ENCODE measurements at regions of chr17 and their contacts with region 1.

Region 1: DNA sequence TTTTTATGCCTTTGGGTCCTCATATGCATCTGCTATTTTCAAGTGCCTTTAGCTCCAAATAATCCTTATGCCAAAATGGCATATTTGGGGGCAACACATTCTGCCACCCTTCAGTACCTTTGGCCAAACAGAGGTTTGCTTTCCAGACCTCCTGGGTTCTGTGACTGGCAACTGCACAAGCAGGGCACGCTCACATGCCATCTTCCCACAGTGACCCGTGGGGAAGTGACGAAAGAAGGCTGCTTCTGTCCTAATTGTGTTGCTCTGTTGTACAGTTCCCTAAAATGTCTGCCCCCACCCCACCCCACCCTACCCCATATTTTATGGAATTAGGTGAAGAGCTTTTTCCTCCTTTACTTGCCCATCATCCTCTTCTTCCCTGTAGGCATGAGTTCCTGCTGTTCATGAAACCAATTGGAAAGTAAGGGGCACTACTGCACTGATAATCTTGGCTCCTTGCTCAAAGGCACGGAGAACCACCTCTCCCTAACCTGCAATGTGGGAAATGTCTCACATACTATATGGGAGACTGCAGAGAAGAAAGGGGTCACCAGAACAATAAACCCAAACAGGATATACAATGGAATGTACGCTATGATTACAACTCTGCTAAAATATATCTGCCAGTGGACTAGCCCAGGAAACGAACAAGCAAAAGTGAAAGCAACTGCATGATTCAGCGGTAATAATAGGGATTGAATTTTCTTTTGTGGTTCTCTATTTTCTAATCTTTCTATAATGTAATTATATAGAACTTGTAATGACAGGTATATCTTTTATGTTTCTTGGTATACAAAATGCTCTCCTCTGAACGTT is 3.3 kb upstream of the SLFN12L start:
- DNase-seq: no peak
- H3K4me3 ChIP-seq: no peak overlapping the region
- H3K4me1 ChIP-seq: no peaks in the 10 kb centered on the region; the same call in none of the 2 replicates
- H3K27me3 ChIP-seq: peaks cover 5% of the 10 kb centered on the region; the same call in 1 of the 2 replicates

Region 2: DNA sequence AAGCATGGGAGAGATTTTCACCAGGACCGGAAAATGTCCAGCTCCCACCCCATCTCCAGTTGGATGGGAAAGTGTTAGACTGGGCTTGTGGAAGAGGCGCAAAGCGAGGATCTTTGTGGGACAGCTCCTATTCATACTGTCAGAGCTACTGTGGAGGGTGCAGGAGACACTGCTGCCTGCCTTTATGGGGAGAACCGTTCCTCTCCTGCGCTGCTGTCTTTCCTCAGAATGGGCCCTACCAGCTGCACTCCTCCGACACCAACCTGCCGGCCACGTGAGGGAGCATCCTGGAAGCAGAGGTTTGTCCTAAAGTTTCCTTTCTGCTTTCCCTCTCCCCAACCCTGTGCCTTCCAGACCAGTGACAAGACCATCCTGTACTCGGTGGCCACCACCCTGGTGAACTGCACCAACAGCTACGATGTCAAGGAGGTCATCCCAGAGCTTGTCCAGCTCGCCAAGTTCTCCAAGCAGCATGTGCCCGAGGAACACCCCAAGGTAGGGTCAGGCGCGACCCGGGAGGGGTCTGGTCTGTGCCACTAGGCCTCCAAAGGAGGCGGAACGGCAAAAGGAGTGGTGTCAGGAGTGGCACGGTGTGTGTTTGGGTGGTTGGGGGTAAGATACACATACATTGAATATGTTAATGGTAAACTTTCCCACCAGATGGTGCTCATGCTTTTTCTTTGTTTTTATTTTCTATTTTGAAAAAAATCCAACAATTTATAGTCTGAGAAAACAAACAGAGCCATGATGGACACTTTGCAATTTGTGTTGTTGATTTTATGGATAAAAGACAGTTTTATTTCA is 369.6 kb before region 1 on chr17:
- in situ Hi-C with region 1: loop called (anchors 25 kb)
- DNase-seq: no peak
- H3K4me3 ChIP-seq: no peak overlapping the region
- H3K4me1 ChIP-seq: no peaks in the 10 kb centered on the region
- H3K27me3 ChIP-seq: no peaks in the 10 kb centered on the region

Measured in HAP-1 (cell line).